Transverse colon (tissue), 4 donors: ENCODE measurements at regions of chr6 and their contacts with region 1.

Region 1: DNA sequence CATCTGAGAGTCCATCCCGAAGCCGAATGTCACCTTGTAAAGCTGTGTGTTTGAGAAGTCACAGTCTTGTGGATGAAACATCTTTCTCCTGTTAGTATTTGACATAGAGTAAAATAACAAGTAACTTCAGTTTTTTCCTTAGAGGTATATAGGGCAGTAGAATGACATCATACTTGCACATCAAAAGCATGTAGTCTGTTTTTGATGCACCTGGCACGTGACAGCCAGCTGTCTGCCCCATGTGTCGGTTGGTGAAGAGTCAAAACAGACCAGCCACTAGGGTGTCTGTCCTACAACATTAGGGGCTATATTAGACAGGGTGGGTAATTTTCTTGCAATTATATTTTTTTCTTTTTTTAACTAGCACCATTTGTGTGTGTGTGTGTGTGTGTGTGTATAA is 70.2 kb downstream of the SNX9 start:
- DNase-seq: no peak
- H3K4me3 ChIP-seq: no peak overlapping the region
- H3K27ac ChIP-seq: no peak overlapping the region
- H3K4me1 ChIP-seq: no peaks in the 10 kb centered on the region
- H3K27me3 ChIP-seq: no peaks in the 10 kb centered on the region
- CTCF ChIP-seq: no peak
- EP300 ChIP-seq: no peak
- POLR2A ChIP-seq: no peak

Region 2: DNA sequence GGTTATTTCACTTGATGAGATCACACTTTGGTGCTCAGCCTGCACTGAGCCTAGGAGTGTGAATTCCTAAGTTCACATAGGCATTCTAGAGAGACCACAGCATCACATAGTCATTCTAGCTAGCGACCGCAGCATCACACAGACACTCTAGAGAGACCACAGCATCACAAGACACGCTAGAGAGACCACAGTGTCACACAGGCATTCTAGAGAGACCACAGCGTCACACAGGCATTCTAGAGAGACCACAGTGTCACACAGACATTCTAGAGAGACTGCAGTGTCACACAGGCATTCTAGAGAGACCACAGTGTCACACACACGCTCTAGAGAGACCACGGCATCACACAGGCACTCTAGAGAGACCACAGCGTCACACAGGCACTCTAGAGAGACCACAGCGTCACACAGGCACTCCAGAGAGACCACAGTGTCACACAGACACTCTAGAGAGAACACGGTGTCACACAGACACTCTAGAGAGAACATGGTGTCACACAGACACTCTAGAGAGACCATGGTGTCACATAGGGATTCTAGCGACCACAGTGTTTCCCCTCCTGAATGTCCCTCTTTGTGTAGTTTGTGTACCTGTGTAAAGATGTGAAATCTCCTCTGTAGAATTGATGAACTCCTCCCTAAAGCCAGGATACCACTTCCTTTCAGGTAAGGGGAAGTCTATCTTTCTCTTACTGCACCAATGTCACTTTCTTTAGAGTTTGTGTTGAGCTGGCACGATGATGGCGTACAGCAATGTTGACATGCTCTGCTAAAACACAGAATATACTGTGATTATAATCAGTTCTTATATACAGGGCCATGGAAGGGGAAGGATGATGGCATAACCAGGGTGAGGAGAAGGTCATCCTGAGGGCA is 342.9 kb before region 1 on chr6:
- in situ Hi-C with region 1: no loop called
- intact Hi-C with region 1: loop called (anchors 5 kb)
- DNase-seq: no peak
- H3K4me3 ChIP-seq: no peak overlapping the region
- H3K27ac ChIP-seq: peak overlapping the region in 1 of 4 donors; percentile 6
- H3K4me1 ChIP-seq: peaks cover 0 to 6% (median 0%) of the 10 kb centered on the region in 4 donors
- H3K27me3 ChIP-seq: no peaks in the 10 kb centered on the region
- CTCF ChIP-seq: no peak
- EP300 ChIP-seq: no peak
- POLR2A ChIP-seq: no peak

Region 3: GRCh38 chr6:157667211-157668008 is 225.8 kb before region 1 on chr6:
- in situ Hi-C with region 1: no loop called
- intact Hi-C with region 1: no loop called
- DNase-seq: peak; percentile 58
- H3K4me3 ChIP-seq: no peak overlapping the region
- H3K27ac ChIP-seq: no peak overlapping the region
- H3K4me1 ChIP-seq: peaks cover 4 to 37% (median 15%) of the 10 kb centered on the region in 4 donors
- H3K27me3 ChIP-seq: no peaks in the 10 kb centered on the region
- CTCF ChIP-seq: peak; percentile 85 to 94 (median 85)
- EP300 ChIP-seq: no peak
- POLR2A ChIP-seq: no peak

Region 4: DNA sequence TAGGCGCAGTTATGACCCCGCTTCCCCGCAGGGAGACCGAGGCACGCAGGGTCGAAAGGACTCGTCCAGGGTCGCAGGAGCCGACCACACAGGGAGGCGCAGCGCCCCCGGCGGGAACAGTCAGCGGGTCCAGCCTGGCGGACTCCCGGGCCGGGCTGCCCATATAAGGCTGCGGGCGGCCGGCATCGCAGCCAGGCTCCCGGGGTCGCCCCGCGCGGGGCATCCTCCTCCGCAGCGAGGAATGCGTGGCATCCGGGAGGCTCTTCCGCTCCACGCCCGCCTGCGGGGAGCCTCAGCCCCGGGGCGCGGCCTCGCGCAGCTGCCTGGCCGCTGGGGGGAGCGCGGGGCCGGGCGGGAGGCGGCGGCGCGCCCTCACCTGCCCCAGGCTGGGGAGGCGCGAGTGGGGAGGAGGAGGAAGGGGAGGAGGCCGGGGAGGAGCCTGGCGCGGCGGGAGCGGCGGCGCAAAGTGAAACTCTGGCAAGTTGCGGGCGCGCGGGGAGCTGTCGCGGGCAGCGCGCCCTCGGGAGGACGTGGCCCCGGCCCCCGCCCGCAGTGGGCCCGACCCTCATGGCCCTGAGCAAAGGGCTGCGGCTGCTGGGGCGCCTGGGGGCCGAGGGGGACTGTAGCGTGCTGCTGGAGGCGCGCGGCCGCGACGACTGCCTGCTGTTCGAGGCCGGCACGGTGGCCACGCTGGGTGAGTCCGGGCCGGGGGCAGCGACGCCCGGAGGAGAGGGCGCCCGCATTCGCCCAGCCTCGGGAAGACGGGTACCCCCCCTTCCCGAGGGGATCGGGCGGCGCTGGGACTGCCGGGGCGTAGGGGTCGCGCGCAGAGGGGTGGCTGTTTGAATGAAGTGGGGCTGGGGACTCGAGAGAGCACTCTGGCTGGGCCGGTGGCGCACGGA is 88.4 kb after region 1 on chr6 and contains the start of gene SYNJ2:
- in situ Hi-C with region 1: no loop called
- intact Hi-C with region 1: no loop called
- DNase-seq: peak; percentile 90
- H3K4me3 ChIP-seq: peak within 1 kb of the TSS; percentile 64 to 94 (median 82)
- H3K27ac ChIP-seq: peak within 1 kb of the TSS; percentile 85 to 94 (median 90)
- H3K4me1 ChIP-seq: peaks cover 10 to 53% (median 35%) of the 10 kb centered on the region in 4 donors
- H3K27me3 ChIP-seq: no peaks in the 10 kb centered on the region
- CTCF ChIP-seq: peak; percentile 49 to 78 (median 66)
- EP300 ChIP-seq: no peak
- POLR2A ChIP-seq: peak; percentile 60
- total RNA-seq, gene SYNJ2: 27.8 to 42.6 (median 31.8) TPM